ENCODE measurements at regions of chr6 and their contacts with region 1.

Region 1: GRCh38 chr6:75601304-75602245 is at the start of gene SENP6:
- DNase-seq: peak; percentile 93
- ATAC-seq: peak; percentile 80
- H3K4me3 ChIP-seq: peak within 1 kb of the TSS; percentile 84 to 99 (median 92)
- H3K4me3 Mint-ChIP-seq: peak within 1 kb of the TSS; percentile 94
- H3K27ac ChIP-seq: peak within 1 kb of the TSS; percentile 92 to 97
- H3K27ac Mint-ChIP-seq: peak within 1 kb of the TSS; percentile 98
- H3K4me1 ChIP-seq: peaks cover 36 to 44% of the 10 kb centered on the region in 2 donors
- H3K4me1 Mint-ChIP-seq: peaks cover 62% of the 10 kb centered on the region
- H3K27me3 ChIP-seq: no peaks in the 10 kb centered on the region
- H3K27me3 Mint-ChIP-seq: no peaks in the 10 kb centered on the region
- CTCF ChIP-seq: no peak
- total RNA-seq, gene SENP6: 161 and 178 TPM in 2 replicates

Region 2: GRCh38 chr6:75243333-75244062 is 358.1 kb before region 1 on chr6 and contains the start of gene COX7A2:
- CTCF ChIA-PET with region 1: no interaction called
- POLR2A ChIA-PET with region 1: interaction called, 5 read pairs
- intact Hi-C with region 1: loop called (anchors 2 kb)
- DNase-seq: peak; percentile 92
- ATAC-seq: peak; percentile 98
- H3K4me3 ChIP-seq: peak within 1 kb of the TSS; percentile 85 to 98 (median 90)
- H3K4me3 Mint-ChIP-seq: peak within 1 kb of the TSS; percentile 99
- H3K27ac ChIP-seq: peak within 1 kb of the TSS; percentile 92 to 97
- H3K27ac Mint-ChIP-seq: peak within 1 kb of the TSS; percentile 98
- H3K4me1 ChIP-seq: peaks cover 5 to 10% of the 10 kb centered on the region in 2 donors
- H3K4me1 Mint-ChIP-seq: peaks cover 24% of the 10 kb centered on the region
- H3K27me3 ChIP-seq: peaks cover 0 to 14% (median 4%) of the 10 kb centered on the region in 4 experiments
- H3K27me3 Mint-ChIP-seq: peaks cover 16% of the 10 kb centered on the region
- CTCF ChIP-seq: no peak
- total RNA-seq, gene COX7A2: 157 and 160 TPM in 2 replicates

Region 3: GRCh38 chr6:75621846-75622245 is 20.3 kb after region 1 on chr6:
- CTCF ChIA-PET with region 1: no interaction called
- POLR2A ChIA-PET with region 1: interaction called, 3 read pairs
- intact Hi-C with region 1: loop called (anchors 2 kb)
- DNase-seq: no peak
- ATAC-seq: no peak
- H3K4me3 ChIP-seq: no peak overlapping the region
- H3K4me3 Mint-ChIP-seq: no peak overlapping the region
- H3K27ac ChIP-seq: peak overlapping the region in 1 of 2 donors; percentile 47
- H3K27ac Mint-ChIP-seq: peak overlapping the region; percentile 22
- H3K4me1 ChIP-seq: peaks cover 14 to 29% of the 10 kb centered on the region in 2 donors
- H3K4me1 Mint-ChIP-seq: peaks cover 39% of the 10 kb centered on the region
- H3K27me3 ChIP-seq: no peaks in the 10 kb centered on the region
- H3K27me3 Mint-ChIP-seq: no peaks in the 10 kb centered on the region
- CTCF ChIP-seq: no peak

Region 4: GRCh38 chr6:75711173-75711572 is 109.6 kb after region 1 on chr6:
- CTCF ChIA-PET with region 1: no interaction called
- POLR2A ChIA-PET with region 1: no interaction called
- intact Hi-C with region 1: no loop called
- DNase-seq: no peak
- ATAC-seq: no peak
- H3K4me3 ChIP-seq: no peak overlapping the region
- H3K4me3 Mint-ChIP-seq: no peak overlapping the region
- H3K27ac ChIP-seq: no peak overlapping the region
- H3K27ac Mint-ChIP-seq: no peak overlapping the region
- H3K4me1 ChIP-seq: no peaks in the 10 kb centered on the region
- H3K4me1 Mint-ChIP-seq: no peaks in the 10 kb centered on the region
- H3K27me3 ChIP-seq: no peaks in the 10 kb centered on the region
- H3K27me3 Mint-ChIP-seq: no peaks in the 10 kb centered on the region
- CTCF ChIP-seq: no peak